Heart right ventricle (tissue), 16 donors: ENCODE measurements at regions of chr14 and their contacts with region 1.

Region 1: DNA sequence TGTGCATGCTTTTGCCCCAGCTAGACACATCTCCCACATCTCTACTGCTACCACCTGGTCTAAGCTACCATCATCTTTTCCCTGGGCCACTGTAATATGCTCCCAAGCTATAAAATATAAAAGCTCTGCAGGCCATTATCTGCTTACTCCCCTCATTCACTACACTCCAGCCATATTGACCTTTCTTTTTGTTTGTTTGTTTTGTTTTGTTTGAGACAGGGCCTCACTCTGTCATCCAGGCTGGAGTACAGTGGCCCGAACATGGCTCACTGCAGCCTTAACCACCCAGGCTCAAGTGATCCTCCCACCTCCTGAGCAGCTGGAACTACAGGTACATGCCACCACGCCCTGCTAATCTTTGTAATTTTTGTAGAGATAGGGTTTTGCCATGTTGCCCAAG is 45.8 kb downstream of the RHOJ start:
- DNase-seq: no peak
- ATAC-seq: no peak
- H3K4me3 ChIP-seq: no peak overlapping the region
- H3K27ac ChIP-seq: no peak overlapping the region
- H3K4me1 ChIP-seq: peaks cover 0 to 47% (median 13%) of the 10 kb centered on the region in 9 donors
- H3K27me3 ChIP-seq: no peaks in the 10 kb centered on the region
- CTCF ChIP-seq: no peak

Region 2: GRCh38 chr14:63299351-63300110 is 49.5 kb after region 1 on chr14:
- intact Hi-C with region 1: loop called in 1 of 10 experiments (anchors 2 kb)
- DNase-seq: no peak
- ATAC-seq: no peak
- H3K4me3 ChIP-seq: no peak overlapping the region
- H3K27ac ChIP-seq: no peak overlapping the region
- H3K4me1 ChIP-seq: peaks cover 0 to 12% (median 4%) of the 10 kb centered on the region in 9 donors
- H3K27me3 ChIP-seq: no peaks in the 10 kb centered on the region
- CTCF ChIP-seq: no peak